ENCODE measurements at regions of chr2 and their contacts with region 1.

Region 1: DNA sequence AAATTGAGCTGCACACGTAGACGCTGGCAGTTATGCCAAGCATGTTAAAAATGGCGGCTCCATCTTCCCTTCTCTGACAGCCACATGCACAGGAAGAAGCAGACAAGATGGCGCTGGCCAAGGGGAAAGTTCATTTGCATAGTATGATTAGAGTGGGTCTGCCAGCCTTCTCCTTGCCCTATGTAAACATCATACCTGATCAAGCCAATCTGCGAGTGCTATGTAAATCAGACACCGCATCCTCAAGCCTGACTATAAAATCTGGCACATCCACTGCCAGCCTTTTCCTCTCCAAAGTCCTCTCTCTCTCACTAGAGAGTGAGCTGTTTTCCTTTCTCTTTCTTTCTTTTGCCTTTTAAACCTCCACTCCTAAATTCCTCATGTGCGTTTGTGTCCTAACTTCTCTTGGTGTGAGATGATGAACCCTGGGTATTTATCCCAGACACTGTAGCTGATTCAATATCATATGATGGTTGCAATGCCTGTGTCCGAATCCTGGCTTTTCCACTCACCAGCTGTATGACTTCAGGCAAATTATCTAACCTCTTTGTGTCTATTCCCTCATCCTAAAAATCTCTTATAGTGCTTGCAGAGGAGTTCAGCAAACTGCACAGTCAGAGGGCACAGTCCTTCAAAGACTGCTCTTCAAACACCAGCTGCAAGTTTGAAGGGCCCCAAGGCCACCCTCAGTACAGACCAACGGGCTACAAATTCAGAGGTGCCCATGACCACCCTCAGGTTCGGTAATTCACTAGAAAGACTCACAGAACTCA is 39.3 kb upstream of the ITSN2 start:
- DNase-seq: no peak
- ATAC-seq: no peak; the same call in none of the 2 replicates
- H3K4me3 ChIP-seq: no peak overlapping the region
- H3K27ac ChIP-seq: no peak overlapping the region
- H3K4me1 ChIP-seq: no peaks in the 10 kb centered on the region; the same call in 1 of the 2 replicates
- H3K27me3 ChIP-seq: peaks cover 10% of the 10 kb centered on the region
- CTCF ChIP-seq: no peak
- POLR2A ChIP-seq: no peak
- RAD21 ChIP-seq: no peak

Region 2: GRCh38 chr2:24123922-24124580 is 275.6 kb before region 1 on chr2:
- CTCF ChIA-PET with region 1: no interaction called
- POLR2A ChIA-PET with region 1: interaction called, 17 read pairs
- dilution Hi-C with region 1: no loop called
- in situ Hi-C with region 1: no loop called
- intact Hi-C with region 1: no loop called
- DNase-seq: peak; percentile 34
- ATAC-seq: peak; percentile 2; the same call in 1 of the 2 replicates
- H3K4me3 ChIP-seq: peak overlapping the region; percentile 84
- H3K27ac ChIP-seq: peak overlapping the region; percentile 82
- H3K4me1 ChIP-seq: no peaks in the 10 kb centered on the region
- H3K27me3 ChIP-seq: no peaks in the 10 kb centered on the region
- CTCF ChIP-seq: no peak
- POLR2A ChIP-seq: no peak
- RAD21 ChIP-seq: no peak